ENCODE measurements at regions of chr15 and their contacts with region 1.

Region 1: DNA sequence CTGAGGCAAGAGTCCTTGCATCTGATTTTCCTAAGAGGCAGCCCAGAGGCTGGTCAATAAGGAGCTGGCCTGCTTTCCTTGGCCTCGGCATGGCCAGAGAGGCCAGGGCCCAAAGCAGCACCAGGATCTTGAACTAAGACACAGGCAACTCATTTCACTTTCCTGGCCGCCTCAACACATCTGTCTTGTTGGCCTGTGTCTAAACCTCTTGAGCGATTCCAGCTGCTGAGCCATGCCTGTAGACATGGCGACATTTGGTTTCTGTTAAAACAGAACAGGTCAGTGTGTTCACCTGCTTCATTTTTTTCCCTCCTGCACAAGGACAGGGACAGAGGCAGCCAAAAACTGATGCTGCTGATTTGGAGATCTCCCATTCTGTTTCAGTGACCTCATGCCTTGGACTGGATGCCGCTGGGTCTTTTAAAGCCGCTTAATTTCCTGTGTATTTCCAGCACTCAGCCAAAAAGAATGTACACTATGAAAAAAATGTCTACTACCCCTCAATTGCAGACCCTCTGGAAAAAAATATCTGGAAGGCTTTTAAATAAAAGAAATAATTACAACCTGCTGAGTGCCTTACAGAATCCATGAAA is 266.6 kb upstream of the ICE2 start:
- DNase-seq: no peak
- H3K4me3 ChIP-seq: no peak overlapping the region
- H3K27ac ChIP-seq: no peak overlapping the region
- H3K4me1 ChIP-seq: no peaks in the 10 kb centered on the region
- H3K27me3 ChIP-seq: no peaks in the 10 kb centered on the region
- CTCF ChIP-seq: no peak
- POLR2A ChIP-seq: no peak

Region 2: DNA sequence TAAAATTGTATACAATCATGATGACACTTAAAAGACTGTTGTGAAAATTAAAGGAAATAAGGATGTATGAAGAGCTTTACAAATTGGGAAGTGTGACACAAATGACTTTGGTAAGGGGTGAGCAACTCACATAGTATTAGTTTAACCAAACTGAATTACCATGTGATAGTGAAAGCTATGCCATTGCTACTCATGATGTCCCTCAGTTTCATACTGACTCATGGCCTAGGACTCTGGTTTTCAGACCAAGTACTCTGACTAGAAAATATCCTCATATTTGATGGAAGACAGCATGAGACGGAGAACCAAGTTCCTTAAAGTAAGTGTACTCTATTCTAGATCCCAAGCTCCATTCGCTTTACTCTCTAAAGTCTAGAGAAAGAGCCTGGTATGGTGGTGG is 63.5 kb before region 1 on chr15:
- CTCF ChIA-PET with region 1: no interaction called
- POLR2A ChIA-PET with region 1: no interaction called
- dilution Hi-C with region 1: no loop called
- intact Hi-C with region 1: loop called (anchors 10 kb)
- DNase-seq: no peak
- H3K4me3 ChIP-seq: no peak overlapping the region
- H3K27ac ChIP-seq: no peak overlapping the region
- H3K4me1 ChIP-seq: no peaks in the 10 kb centered on the region
- H3K27me3 ChIP-seq: no peaks in the 10 kb centered on the region
- CTCF ChIP-seq: no peak
- POLR2A ChIP-seq: no peak